Activated B cell treated with CpG ODN at 0.5 μM for 24 hours (primary cell): ENCODE measurements at regions of chr20 and their contacts with region 1.

Region 1: GRCh38 chr20:53594068-53595017 is 704 bp upstream of the ZNF217 start:
- DNase-seq: peak; percentile 99
- ATAC-seq: peak; percentile 74
- H3K4me3 Mint-ChIP-seq: peak overlapping the region; percentile 93
- H3K27ac Mint-ChIP-seq: peak overlapping the region; percentile 89
- H3K4me1 Mint-ChIP-seq: peaks cover 57% of the 10 kb centered on the region
- H3K27me3 Mint-ChIP-seq: no peaks in the 10 kb centered on the region
- CTCF ChIP-seq: no peak

Region 2: DNA sequence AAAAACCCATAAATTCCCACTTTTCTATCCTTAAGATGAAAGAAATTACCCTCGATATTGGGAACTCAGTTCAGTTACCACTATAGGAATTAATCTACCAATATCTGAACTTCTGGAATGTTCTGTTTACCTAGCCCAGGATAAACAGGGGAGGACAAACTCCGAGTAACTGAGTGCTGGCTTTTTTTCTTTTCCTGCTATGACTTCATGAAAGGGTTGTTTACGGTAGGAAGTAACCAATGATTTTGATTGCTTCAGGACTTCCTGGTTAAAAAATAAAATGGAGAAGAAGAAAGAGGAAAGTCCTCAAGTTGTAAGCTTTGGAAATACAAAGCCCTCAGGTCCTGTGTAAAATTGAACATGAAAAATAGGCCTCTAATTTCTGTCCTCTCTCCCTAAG is 168.4 kb before region 1 on chr20:
- CTCF ChIA-PET with region 1: no interaction called
- POLR2A ChIA-PET with region 1: no interaction called
- intact Hi-C with region 1: no loop called
- DNase-seq: no peak
- ATAC-seq: no peak
- H3K4me3 Mint-ChIP-seq: no peak overlapping the region
- H3K27ac Mint-ChIP-seq: no peak overlapping the region
- H3K4me1 Mint-ChIP-seq: no peaks in the 10 kb centered on the region
- H3K27me3 Mint-ChIP-seq: peaks cover 11% of the 10 kb centered on the region
- CTCF ChIP-seq: no peak

Region 3: GRCh38 chr20:53623454-53624211 is 29.3 kb after region 1 on chr20:
- CTCF ChIA-PET with region 1: no interaction called
- POLR2A ChIA-PET with region 1: interaction called, 26 read pairs
- intact Hi-C with region 1: loop called (anchors 2 kb)
- DNase-seq: no peak
- ATAC-seq: peak; percentile 76
- H3K4me3 Mint-ChIP-seq: peak overlapping the region; percentile 83
- H3K27ac Mint-ChIP-seq: peak overlapping the region; percentile 93
- H3K4me1 Mint-ChIP-seq: peaks cover 51% of the 10 kb centered on the region
- H3K27me3 Mint-ChIP-seq: no peaks in the 10 kb centered on the region
- CTCF ChIP-seq: no peak

Region 4: GRCh38 chr20:53660078-53660909 is 66.0 kb after region 1 on chr20:
- CTCF ChIA-PET with region 1: no interaction called
- POLR2A ChIA-PET with region 1: interaction called, 10 read pairs
- intact Hi-C with region 1: no loop called
- DNase-seq: no peak
- ATAC-seq: peak; percentile 31
- H3K4me3 Mint-ChIP-seq: peak overlapping the region; percentile 87
- H3K27ac Mint-ChIP-seq: peak overlapping the region; percentile 90
- H3K4me1 Mint-ChIP-seq: peaks cover 66% of the 10 kb centered on the region
- H3K27me3 Mint-ChIP-seq: no peaks in the 10 kb centered on the region
- CTCF ChIP-seq: no peak

Region 5: GRCh38 chr20:53750827-53751619 is 156.7 kb after region 1 on chr20:
- CTCF ChIA-PET with region 1: no interaction called
- POLR2A ChIA-PET with region 1: interaction called, 18 read pairs
- intact Hi-C with region 1: loop called (anchors 5 kb)
- DNase-seq: no peak
- ATAC-seq: peak; percentile 87
- H3K4me3 Mint-ChIP-seq: peak overlapping the region; percentile 45
- H3K27ac Mint-ChIP-seq: peak overlapping the region; percentile 95
- H3K4me1 Mint-ChIP-seq: peaks cover 64% of the 10 kb centered on the region
- H3K27me3 Mint-ChIP-seq: no peaks in the 10 kb centered on the region
- CTCF ChIP-seq: no peak

Region 6: DNA sequence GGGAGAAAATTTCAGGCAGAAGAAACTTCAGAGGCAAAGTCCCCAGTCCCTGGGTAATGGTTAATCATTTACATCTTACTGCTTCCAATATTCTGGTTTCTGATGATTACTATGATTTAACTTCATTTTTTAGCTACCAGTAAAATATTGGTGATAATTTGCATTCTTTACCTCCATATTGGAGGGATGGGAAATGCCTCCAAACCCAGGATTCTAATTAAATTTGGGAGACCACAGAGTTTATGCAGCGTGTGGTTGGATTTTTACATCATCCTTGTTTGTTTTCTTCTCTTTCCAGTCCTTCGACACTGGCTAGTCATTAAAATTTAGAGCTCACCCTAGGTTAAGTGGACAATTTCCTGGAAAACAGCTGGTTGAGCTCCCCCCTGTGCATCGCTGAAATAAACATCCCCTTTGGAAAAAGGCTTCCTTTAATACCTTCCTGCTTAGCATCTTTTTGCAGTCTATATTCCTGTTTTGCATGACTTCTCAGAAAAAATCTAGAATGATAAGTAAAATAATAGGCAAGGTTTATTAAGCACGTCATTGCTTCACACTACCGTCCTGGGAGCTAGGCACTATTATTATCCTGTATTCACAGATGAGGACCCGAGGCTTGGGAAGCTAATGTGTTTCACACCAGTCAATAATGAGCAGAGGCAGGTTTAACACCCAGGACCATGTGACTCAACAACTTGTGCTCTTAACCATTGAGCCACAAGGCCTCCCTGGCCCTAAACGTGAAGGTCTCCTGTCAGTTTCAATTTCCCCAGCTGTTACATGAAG is 284.4 kb after region 1 on chr20:
- CTCF ChIA-PET with region 1: no interaction called
- POLR2A ChIA-PET with region 1: interaction called, 11 read pairs
- intact Hi-C with region 1: no loop called
- DNase-seq: no peak
- ATAC-seq: no peak
- H3K4me3 Mint-ChIP-seq: no peak overlapping the region
- H3K27ac Mint-ChIP-seq: no peak overlapping the region
- H3K4me1 Mint-ChIP-seq: peaks cover 6% of the 10 kb centered on the region
- H3K27me3 Mint-ChIP-seq: no peaks in the 10 kb centered on the region
- CTCF ChIP-seq: no peak

Region 7: DNA sequence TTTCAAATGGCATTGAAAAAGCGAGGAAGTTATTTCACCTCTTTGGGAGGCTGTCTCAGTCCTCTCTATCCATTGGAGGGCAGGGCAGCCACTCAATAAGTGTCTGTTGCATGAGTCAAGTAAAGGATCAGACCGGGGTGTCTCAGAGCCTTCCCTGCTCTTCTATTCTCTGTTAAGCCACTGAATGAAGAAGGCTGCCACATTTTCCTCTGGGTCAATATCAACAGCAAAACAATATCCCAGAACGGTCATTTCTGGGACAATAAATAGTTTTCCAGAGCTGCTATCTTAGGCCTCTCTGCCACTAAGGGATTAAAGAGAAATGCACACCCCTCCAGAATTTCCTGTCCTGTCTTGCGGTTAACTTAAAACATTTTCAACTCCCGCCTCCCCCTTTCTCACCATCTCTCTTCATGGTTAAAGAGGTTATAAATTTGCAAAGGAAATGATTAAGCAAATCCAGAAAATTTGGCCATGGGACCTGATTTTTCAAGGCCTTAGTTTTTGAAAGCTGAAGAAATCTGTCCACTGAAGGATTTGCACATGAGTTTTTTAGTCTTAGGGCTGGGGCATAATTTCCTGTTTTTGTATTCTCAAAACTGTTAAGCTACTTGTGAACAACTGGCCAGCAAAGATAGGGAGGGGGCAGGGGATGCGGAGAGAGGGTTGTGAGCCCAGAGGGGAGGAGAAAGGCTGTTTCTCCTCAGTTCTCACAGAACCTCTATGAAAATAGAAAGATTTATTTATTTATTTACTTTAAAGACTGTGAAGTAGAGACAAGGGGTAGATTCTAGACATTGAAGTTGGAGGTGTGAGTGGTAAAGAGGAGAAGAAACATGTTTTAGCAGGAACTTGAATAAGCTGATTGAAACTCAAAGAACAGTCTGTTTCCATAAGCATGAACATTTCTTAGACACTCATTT is 340.3 kb after region 1 on chr20:
- CTCF ChIA-PET with region 1: interaction called, 3 read pairs
- POLR2A ChIA-PET with region 1: interaction called, 30 read pairs
- intact Hi-C with region 1: no loop called
- DNase-seq: no peak
- ATAC-seq: peak; percentile 41
- H3K4me3 Mint-ChIP-seq: peak overlapping the region; percentile 60
- H3K27ac Mint-ChIP-seq: peak overlapping the region; percentile 90
- H3K4me1 Mint-ChIP-seq: peaks cover 89% of the 10 kb centered on the region
- H3K27me3 Mint-ChIP-seq: no peaks in the 10 kb centered on the region
- CTCF ChIP-seq: no peak

Region 8: GRCh38 chr20:54107600-54108416 is 513.5 kb after region 1 on chr20:
- CTCF ChIA-PET with region 1: no interaction called
- POLR2A ChIA-PET with region 1: no interaction called
- intact Hi-C with region 1: no loop called
- DNase-seq: no peak
- ATAC-seq: no peak
- H3K4me3 Mint-ChIP-seq: no peak overlapping the region
- H3K27ac Mint-ChIP-seq: no peak overlapping the region
- H3K4me1 Mint-ChIP-seq: peaks cover 2% of the 10 kb centered on the region
- H3K27me3 Mint-ChIP-seq: peaks cover 15% of the 10 kb centered on the region
- CTCF ChIP-seq: no peak